ENCODE measurements at regions of chr18 and their contacts with region 1.

Region 1: DNA sequence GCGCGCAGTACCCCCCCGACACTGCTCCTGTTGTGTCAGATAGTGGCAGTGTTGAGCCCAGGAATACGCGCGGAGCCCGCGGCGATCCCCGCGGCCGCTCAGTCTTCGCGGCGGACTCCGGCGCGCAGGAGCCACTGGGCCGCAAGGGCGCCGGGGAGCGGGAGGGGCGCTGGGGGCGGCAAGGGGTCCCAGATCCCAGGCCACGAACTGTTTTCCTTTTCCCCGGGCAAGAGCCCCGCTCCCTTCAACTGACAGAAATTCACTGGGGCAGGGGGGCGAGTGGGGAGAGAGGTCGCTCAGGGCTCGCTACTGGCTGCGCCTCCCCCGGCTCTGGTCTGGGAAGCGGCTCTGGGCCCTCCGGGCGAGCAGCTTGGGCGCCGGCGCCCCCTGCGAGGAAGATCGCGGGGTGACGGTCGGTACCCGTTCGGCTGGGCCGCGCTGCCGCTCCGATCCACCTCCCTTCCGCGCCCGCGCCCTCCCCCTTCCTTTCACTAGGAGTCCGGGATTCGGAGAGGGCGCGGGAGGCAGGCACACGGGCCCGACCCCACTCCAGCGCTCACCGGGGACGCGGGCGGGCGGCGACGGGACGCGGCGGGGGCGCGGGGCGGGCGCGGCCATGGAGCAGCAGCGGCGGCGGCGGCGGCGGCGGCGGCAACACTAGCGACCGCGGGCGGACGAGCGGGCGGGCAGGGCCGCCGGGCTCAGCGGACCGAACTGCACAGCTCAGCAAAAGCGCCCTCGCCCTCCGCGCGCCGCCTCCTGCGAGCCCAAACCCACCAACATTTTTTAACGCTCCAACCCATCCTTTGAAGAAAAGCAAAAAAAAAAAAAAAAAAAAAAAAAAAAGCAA is 1.4 kb upstream of the SETBP1 start:
- DNase-seq: peak; percentile 72
- H3K4me3 Mint-ChIP-seq: peak overlapping the region; percentile 66
- H3K27ac Mint-ChIP-seq: no peak overlapping the region
- H3K4me1 Mint-ChIP-seq: peaks cover 15% of the 10 kb centered on the region
- H3K27me3 Mint-ChIP-seq: peaks cover 28% of the 10 kb centered on the region

Region 2: DNA sequence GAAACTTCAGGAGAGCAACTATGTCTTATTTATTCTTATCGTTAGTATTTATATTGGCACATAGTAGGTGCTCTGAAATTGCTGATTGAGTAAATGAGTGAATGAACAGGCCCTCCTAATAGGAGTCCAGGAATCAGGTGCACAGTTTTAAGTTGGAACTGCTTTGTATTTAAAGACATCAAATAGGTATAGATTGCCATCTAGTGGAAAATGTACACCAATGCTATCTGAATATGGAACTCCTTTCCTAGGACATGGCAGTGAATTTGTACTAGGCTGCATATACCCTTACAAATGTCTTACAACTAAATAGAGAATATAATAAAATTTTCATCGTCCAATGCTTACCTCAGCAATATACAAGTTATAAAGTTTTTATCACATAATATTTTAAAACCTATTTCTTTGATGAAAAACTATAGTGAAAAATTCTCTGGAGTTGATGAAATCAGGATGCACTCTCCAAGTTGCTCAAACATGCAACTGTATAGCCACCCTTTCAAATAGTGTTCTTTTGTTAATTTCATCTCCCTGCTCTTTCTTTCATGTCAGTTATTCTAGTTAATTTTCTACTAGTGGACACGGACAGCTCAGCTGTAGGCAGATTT is 1083.1 kb before region 1 on chr18:
- intact Hi-C with region 1: no loop called
- DNase-seq: no peak
- H3K4me3 Mint-ChIP-seq: no peak overlapping the region
- H3K27ac Mint-ChIP-seq: no peak overlapping the region
- H3K4me1 Mint-ChIP-seq: no peaks in the 10 kb centered on the region
- H3K27me3 Mint-ChIP-seq: peaks cover 4% of the 10 kb centered on the region

Region 3: GRCh38 chr18:44700652-44701051 is 21.4 kb after region 1 on chr18:
- intact Hi-C with region 1: loop called (anchors 2 kb)
- DNase-seq: no peak
- H3K4me3 Mint-ChIP-seq: peak overlapping the region; percentile 3
- H3K27ac Mint-ChIP-seq: peak overlapping the region; percentile 5
- H3K4me1 Mint-ChIP-seq: peaks cover 40% of the 10 kb centered on the region
- H3K27me3 Mint-ChIP-seq: peaks cover 22% of the 10 kb centered on the region

Region 4: DNA sequence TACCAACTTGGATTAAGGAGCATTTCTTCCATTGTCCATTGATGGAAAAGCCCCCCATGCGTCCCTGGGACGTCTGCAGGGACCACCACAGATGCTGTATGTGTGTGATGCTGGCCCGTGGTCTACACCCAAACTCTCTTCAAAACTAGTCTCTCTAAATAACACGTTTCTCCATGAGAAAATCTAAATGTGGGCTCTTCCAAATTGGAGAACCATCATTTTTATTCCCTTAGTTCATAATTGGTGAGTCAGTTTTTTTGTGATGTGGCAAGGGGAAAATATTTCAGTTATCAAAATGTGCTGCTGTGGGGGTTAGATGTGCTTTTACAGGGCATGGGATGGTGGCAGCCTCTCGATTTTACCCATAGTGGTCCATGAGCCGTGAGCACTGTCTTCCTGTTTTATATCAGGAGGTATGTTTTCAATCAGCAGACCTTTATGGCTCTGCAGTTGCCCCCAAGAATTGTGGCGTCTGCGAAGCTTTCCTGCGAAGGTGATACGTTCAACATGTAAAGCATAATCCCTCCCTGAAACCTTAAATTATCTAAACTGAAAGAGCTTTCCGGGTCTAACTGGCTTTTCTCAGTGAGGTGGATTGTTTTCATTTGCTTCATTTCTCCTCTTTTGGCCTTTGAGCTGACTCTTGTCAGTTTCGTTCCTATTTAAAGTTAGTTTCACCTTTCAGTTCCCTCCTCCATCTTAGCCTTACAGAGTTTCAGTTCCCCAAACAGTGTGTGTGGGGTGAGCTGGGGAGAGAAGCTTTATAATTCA is 79.8 kb after region 1 on chr18:
- intact Hi-C with region 1: loop called (anchors 1 kb)
- DNase-seq: peak; percentile 14
- H3K4me3 Mint-ChIP-seq: peak overlapping the region; percentile 75
- H3K27ac Mint-ChIP-seq: peak overlapping the region; percentile 98
- H3K4me1 Mint-ChIP-seq: peaks cover 51% of the 10 kb centered on the region
- H3K27me3 Mint-ChIP-seq: peaks cover 5% of the 10 kb centered on the region

Region 5: DNA sequence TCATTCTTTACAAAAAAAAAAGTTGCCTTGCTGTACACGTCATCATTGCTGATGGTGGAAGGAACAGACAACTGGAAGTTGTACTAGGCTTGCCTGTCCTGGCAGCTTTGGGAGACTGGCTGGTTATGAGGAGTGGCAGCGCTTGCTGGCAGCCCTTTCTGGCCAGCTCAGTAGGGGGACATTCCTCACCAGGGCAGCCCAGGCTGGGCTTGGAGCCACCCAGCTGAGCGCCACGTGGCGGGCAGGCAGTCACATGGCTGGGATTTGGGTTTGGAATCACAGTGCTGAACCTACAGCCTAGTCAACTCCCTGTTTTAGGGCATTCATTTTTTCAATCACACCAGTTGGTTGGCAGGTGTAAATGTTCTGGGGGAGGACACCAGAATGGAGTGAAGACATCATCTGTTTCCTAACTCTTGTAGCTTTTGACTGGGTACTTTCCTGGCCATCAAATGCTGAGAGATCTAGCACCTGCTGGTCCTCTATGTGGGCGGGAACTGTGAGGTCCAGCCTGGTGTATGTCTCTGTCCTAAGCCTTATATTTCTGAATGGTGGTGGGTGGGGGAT is 140.7 kb after region 1 on chr18:
- intact Hi-C with region 1: loop called (anchors 1 kb)
- DNase-seq: no peak
- H3K4me3 Mint-ChIP-seq: no peak overlapping the region
- H3K27ac Mint-ChIP-seq: no peak overlapping the region
- H3K4me1 Mint-ChIP-seq: peaks cover 19% of the 10 kb centered on the region
- H3K27me3 Mint-ChIP-seq: peaks cover 14% of the 10 kb centered on the region

Region 6: DNA sequence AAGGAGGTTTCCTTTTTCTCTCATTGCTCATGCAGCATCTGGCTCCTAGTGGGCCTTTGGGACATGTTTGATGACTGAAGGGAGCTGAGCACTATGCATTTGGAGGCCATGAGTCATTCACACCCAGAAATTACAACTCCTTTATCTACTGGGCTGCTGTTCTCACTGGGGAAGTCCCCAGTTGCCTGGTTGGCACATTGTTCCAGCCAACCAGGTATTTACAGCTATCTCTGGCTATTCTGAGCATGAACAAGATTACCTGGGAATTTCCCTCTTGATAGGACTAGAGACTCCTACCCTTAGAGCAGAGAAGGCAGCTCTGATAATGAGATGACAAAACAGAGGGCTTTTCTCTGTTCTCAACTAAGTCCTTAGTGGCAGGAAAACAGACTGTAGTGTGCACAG is 207.9 kb after region 1 on chr18:
- intact Hi-C with region 1: loop called (anchors 1 kb)
- DNase-seq: peak; percentile 45
- H3K4me3 Mint-ChIP-seq: peak overlapping the region; percentile 71
- H3K27ac Mint-ChIP-seq: peak overlapping the region; percentile 99
- H3K4me1 Mint-ChIP-seq: peaks cover 31% of the 10 kb centered on the region
- H3K27me3 Mint-ChIP-seq: no peaks in the 10 kb centered on the region

Region 7: GRCh38 chr18:44973282-44973681 is 294.0 kb after region 1 on chr18:
- intact Hi-C with region 1: loop called (anchors 1 kb)
- DNase-seq: no peak
- H3K4me3 Mint-ChIP-seq: no peak overlapping the region
- H3K27ac Mint-ChIP-seq: no peak overlapping the region
- H3K4me1 Mint-ChIP-seq: no peaks in the 10 kb centered on the region
- H3K27me3 Mint-ChIP-seq: no peaks in the 10 kb centered on the region

Region 8: DNA sequence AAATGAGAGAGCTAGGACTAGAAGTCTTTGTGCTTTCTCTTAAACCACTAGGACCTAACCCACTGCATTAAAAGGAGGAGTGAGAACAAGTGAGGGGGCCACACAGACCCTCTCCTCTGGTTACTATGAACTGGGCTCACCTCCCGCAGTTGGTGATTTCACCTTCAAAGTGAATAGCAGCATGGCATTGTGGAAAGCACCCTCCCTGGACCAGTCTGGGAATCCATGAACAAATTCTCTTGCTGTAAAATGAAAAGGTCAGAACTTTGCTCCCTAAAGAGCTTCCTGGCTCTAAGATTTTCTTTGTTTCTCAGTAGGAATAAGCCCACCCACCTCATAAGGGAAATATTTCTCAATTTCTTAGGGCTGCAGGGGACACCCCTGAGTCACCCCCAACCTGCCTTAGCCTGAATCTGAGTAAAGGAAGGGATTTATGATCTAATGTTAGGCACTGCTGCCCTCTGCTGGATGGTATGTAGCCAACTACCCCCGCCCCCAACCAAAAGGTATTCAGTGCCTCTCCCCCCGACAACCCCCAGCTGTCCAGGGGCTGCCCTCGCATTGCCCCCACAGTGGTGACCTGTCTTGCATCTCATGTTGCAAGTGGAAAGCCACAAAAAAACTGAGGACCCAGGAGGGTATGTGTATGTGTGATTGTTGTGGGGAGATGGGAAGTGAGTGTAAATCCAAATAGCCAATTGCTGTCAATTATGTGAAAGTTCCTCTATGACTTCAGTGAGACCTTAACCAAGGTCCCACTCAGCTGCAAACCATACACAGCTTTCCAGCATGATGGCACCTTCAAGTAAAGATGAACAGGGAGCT is 705.1 kb after region 1 on chr18:
- intact Hi-C with region 1: loop called (anchors 5 kb)
- DNase-seq: peak; percentile 5
- H3K4me3 Mint-ChIP-seq: no peak overlapping the region
- H3K27ac Mint-ChIP-seq: no peak overlapping the region
- H3K4me1 Mint-ChIP-seq: no peaks in the 10 kb centered on the region
- H3K27me3 Mint-ChIP-seq: peaks cover 3% of the 10 kb centered on the region

Region 9: DNA sequence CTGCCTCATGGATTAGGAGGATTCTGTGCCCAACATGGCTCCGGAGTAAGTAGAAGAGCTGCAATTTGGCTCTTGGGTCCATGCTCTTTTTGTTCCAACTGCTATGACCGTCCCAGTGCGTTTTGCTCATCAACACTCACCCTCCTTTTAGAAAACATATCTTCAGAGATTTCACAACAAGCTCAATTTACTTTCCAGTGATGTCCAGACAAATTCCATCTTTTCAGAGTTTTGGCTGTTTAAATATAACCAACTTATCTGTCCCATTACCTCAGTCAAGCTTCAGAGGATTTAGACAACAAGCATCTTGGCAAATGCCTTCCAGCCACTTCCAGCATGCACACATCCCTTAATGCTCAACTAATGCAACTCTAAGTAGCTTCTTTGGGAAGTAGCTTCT is 929.1 kb after region 1 on chr18:
- intact Hi-C with region 1: no loop called
- DNase-seq: no peak
- H3K4me3 Mint-ChIP-seq: no peak overlapping the region
- H3K27ac Mint-ChIP-seq: no peak overlapping the region
- H3K4me1 Mint-ChIP-seq: no peaks in the 10 kb centered on the region
- H3K27me3 Mint-ChIP-seq: peaks cover 17% of the 10 kb centered on the region